Caco-2 (cell line): ENCODE measurements at regions of chr1 and their contacts with region 1.

Region 1: DNA sequence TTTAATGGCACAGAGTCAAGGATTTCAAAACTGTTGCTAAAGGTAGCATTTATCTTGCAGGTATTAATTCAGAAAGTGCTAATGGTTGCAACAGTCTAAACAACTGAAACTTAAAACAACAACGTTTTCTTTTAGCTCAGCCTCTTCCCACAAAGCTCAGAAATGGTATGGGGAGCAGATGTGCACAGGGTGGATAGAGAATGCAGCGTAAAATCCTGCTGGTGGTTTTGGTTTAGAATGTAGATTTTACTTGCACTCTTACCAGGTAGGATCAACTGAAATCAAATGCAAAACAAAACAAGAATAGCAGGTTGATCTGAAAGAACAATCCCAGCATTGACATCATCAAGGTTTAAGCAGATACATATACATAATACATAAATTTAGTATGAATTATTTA is 3.8 kb upstream of the LRRC8C start:
- DNase-seq: no peak
- H3K4me3 ChIP-seq: no peak overlapping the region
- H3K4me3 Mint-ChIP-seq: no peak overlapping the region
- H3K27ac Mint-ChIP-seq: no peak overlapping the region
- H3K4me1 ChIP-seq: peaks cover 6% of the 10 kb centered on the region; the same call in 1 of the 2 replicates
- H3K4me1 Mint-ChIP-seq: no peaks in the 10 kb centered on the region
- H3K27me3 ChIP-seq: no peaks in the 10 kb centered on the region
- H3K27me3 Mint-ChIP-seq: no peaks in the 10 kb centered on the region
- CTCF ChIP-seq: no peak

Region 2: GRCh38 chr1:89552471-89553081 is 76.6 kb before region 1 on chr1:
- CTCF ChIA-PET with region 1: no interaction called
- POLR2A ChIA-PET with region 1: no interaction called
- intact Hi-C with region 1: no loop called
- DNase-seq: no peak
- H3K4me3 ChIP-seq: no peak overlapping the region
- H3K4me3 Mint-ChIP-seq: no peak overlapping the region
- H3K27ac Mint-ChIP-seq: no peak overlapping the region
- H3K4me1 ChIP-seq: no peaks in the 10 kb centered on the region
- H3K4me1 Mint-ChIP-seq: no peaks in the 10 kb centered on the region
- H3K27me3 ChIP-seq: no peaks in the 10 kb centered on the region
- H3K27me3 Mint-ChIP-seq: no peaks in the 10 kb centered on the region
- CTCF ChIP-seq: no peak

Region 3: DNA sequence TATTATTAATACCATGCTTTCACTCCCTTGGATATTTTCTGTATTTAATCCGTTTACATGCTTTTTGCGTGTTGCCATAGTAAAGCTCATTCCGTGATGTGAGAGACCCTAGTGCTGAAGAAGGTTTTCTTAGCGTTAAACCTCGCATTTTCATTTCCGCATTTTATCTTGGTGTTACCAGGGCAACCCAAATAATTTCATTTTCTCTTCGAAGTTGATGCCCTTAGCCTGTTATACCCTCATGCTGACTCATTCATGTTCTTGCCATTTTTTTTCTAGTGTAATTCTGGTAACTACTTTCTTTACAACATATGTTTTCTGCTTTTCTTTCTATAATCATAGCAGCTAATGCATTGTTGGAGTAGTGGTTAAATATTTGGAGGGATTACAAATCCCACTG is 41.0 kb after region 1 on chr1:
- CTCF ChIA-PET with region 1: no interaction called
- POLR2A ChIA-PET with region 1: no interaction called
- intact Hi-C with region 1: no loop called
- DNase-seq: no peak
- H3K4me3 ChIP-seq: no peak overlapping the region
- H3K4me3 Mint-ChIP-seq: no peak overlapping the region
- H3K27ac Mint-ChIP-seq: no peak overlapping the region
- H3K4me1 ChIP-seq: no peaks in the 10 kb centered on the region
- H3K4me1 Mint-ChIP-seq: no peaks in the 10 kb centered on the region
- H3K27me3 ChIP-seq: no peaks in the 10 kb centered on the region
- H3K27me3 Mint-ChIP-seq: peaks cover 16% of the 10 kb centered on the region
- CTCF ChIP-seq: no peak

Region 4: DNA sequence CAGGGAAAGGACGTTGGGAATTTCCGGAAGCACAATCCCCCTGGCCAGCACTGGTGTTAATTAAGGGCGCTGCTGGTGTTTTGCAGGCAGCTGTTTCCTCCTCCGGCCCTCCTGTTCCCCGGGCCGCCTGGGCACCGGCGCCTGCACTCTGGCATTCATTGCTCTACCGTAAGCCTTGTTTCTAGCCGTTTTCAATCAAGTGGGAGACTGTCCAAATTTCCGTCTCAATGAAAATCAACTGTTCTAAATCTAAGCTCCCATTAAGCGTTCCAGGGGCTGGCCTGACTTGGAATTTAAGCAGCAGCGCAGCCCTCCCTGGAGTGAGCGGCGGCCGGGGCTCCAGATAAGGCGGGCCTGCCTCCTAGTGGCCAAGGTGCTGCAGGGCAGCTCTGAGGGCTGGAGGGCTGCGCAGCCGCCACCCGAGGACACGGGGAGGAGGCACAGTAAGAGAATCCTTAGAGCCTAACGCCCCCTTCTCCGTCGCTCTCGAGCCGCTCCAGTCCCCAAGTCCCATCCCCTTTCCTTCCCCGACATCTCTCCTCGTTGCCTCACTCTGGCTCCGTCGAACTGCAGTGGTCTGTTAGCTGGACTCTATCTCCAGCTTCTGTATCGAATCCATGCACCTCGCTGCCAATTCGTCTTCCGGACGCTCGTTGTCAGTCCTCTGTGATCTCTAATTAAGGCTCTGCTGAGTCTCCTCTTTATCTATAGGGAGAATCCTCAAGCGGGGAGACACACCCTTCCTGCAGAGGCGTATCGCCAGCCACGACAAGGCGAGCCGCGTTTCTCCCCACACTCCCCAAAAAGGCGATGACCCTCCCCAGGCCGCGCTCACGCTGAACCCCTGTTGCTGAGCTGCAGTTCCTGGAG is 133.9 kb after region 1 on chr1:
- CTCF ChIA-PET with region 1: no interaction called
- POLR2A ChIA-PET with region 1: no interaction called
- intact Hi-C with region 1: loop called (anchors 1 kb)
- DNase-seq: peak; percentile 70 to 77
- H3K4me3 ChIP-seq: peak overlapping the region; percentile 30
- H3K4me3 Mint-ChIP-seq: peak overlapping the region; percentile 75
- H3K27ac Mint-ChIP-seq: no peak overlapping the region
- H3K4me1 ChIP-seq: no peaks in the 10 kb centered on the region
- H3K4me1 Mint-ChIP-seq: no peaks in the 10 kb centered on the region
- H3K27me3 ChIP-seq: no peaks in the 10 kb centered on the region
- H3K27me3 Mint-ChIP-seq: peaks cover 3% of the 10 kb centered on the region
- CTCF ChIP-seq: peak; percentile 78 to 84